K562 (cell line): ENCODE measurements at regions of chr13 and their contacts with region 1.

Region 1: GRCh38 chr13:95834134-95834765 is 157.3 kb downstream of the DNAJC3 start:
- DNase-seq: peak; percentile 56 to 63 (median 60)
- ATAC-seq: peak; percentile 85
- H3K4me3 ChIP-seq: no peak overlapping the region
- H3K27ac ChIP-seq: no peak overlapping the region
- H3K4me1 ChIP-seq: no peaks in the 10 kb centered on the region
- H3K27me3 ChIP-seq: no peaks in the 10 kb centered on the region
- CTCF ChIP-seq: peak; percentile 72 to 80 (median 79)
- EP300 ChIP-seq: no peak
- POLR2A ChIP-seq: no peak
- RAD21 ChIP-seq: peak; percentile 81 to 82

Region 2: GRCh38 chr13:95536632-95537241 is 297.5 kb before region 1 on chr13:
- CTCF ChIA-PET with region 1: no interaction called
- POLR2A ChIA-PET with region 1: no interaction called
- in situ Hi-C with region 1: loop called (anchors 25 kb)
- intact Hi-C with region 1: loop called (anchors 2 kb)
- DNase-seq: peak in 1 of 4 experiments; percentile 11
- ATAC-seq: no peak
- H3K4me3 ChIP-seq: no peak overlapping the region
- H3K27ac ChIP-seq: no peak overlapping the region
- H3K4me1 ChIP-seq: no peaks in the 10 kb centered on the region
- H3K27me3 ChIP-seq: no peaks in the 10 kb centered on the region
- CTCF ChIP-seq: peak in 2 of 3 experiments; percentile 39 to 55; a peak in 4 of 6 replicates
- EP300 ChIP-seq: no peak
- POLR2A ChIP-seq: no peak
- RAD21 ChIP-seq: peak; percentile 26 to 53

Region 3: GRCh38 chr13:95614641-95615245 is 219.5 kb before region 1 on chr13:
- CTCF ChIA-PET with region 1: no interaction called
- POLR2A ChIA-PET with region 1: no interaction called
- in situ Hi-C with region 1: loop called (anchors 10 kb)
- intact Hi-C with region 1: no loop called
- DNase-seq: no peak
- ATAC-seq: no peak
- H3K4me3 ChIP-seq: no peak overlapping the region
- H3K27ac ChIP-seq: no peak overlapping the region
- H3K4me1 ChIP-seq: no peaks in the 10 kb centered on the region
- H3K27me3 ChIP-seq: peaks cover 3 to 15% of the 10 kb centered on the region in 2 experiments; a peak in 3 of 5 replicates
- CTCF ChIP-seq: no peak
- EP300 ChIP-seq: no peak
- POLR2A ChIP-seq: no peak
- RAD21 ChIP-seq: no peak

Region 4: DNA sequence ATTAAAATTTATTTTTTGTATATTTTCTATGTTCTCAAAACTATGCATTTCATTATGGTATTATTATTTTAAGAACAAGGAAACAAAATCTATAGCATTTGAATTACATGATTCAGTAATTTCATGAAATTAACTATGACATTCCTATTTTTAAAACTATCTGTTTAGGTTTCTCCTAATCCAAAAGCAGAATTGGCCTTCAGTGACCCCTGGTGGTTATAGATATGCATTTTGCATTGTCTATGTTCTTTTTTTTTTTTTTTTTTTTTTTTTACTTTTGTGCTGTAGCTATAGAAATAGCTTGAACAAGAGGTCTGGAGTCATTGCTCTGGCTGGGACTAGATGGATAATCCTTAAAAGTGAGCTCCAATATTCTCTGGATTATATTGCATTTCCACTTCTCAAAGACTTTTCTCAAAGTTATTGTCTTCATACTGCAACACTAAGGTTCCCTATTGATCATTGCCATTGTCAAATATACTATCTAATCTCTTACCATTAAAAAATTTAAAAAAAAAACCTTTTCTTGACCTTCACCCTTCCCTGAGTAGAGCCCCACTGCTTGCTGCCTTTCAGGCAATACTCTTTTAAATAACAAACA is 173.2 kb before region 1 on chr13:
- CTCF ChIA-PET with region 1: no interaction called
- POLR2A ChIA-PET with region 1: no interaction called
- in situ Hi-C with region 1: no loop called
- intact Hi-C with region 1: loop called (anchors 1 kb)
- DNase-seq: peak; percentile 12 to 41 (median 22)
- ATAC-seq: peak; percentile 51; the same call in 1 of the 3 replicates
- H3K4me3 ChIP-seq: no peak overlapping the region
- H3K27ac ChIP-seq: no peak overlapping the region
- H3K4me1 ChIP-seq: peaks cover 0 to 5% of the 10 kb centered on the region in 2 experiments; a peak in 1 of 5 replicates
- H3K27me3 ChIP-seq: no peaks in the 10 kb centered on the region
- CTCF ChIP-seq: peak; percentile 29 to 64 (median 39); a peak in 3 of 6 replicates
- EP300 ChIP-seq: no peak
- POLR2A ChIP-seq: no peak
- RAD21 ChIP-seq: peak in 1 of 2 experiments; percentile 52; a peak in 2 of 4 replicates

Region 5: GRCh38 chr13:95704510-95704909 is 129.7 kb before region 1 on chr13:
- CTCF ChIA-PET with region 1: no interaction called
- POLR2A ChIA-PET with region 1: no interaction called
- in situ Hi-C with region 1: no loop called
- intact Hi-C with region 1: loop called (anchors 5 kb)
- DNase-seq: peak; percentile 9 to 17 (median 15)
- ATAC-seq: peak; percentile 64
- H3K4me3 ChIP-seq: no peak overlapping the region
- H3K27ac ChIP-seq: no peak overlapping the region
- H3K4me1 ChIP-seq: peaks cover 0 to 12% of the 10 kb centered on the region in 2 experiments; a peak in 3 of 5 replicates
- H3K27me3 ChIP-seq: no peaks in the 10 kb centered on the region
- CTCF ChIP-seq: peak; percentile 8 to 41 (median 30); a peak in 2 of 6 replicates
- EP300 ChIP-seq: no peak
- POLR2A ChIP-seq: no peak
- RAD21 ChIP-seq: 0 out of 4 replicates have a peak, but pooled peaks of 1 of the 2 experiments have one; percentile 15

Region 6: DNA sequence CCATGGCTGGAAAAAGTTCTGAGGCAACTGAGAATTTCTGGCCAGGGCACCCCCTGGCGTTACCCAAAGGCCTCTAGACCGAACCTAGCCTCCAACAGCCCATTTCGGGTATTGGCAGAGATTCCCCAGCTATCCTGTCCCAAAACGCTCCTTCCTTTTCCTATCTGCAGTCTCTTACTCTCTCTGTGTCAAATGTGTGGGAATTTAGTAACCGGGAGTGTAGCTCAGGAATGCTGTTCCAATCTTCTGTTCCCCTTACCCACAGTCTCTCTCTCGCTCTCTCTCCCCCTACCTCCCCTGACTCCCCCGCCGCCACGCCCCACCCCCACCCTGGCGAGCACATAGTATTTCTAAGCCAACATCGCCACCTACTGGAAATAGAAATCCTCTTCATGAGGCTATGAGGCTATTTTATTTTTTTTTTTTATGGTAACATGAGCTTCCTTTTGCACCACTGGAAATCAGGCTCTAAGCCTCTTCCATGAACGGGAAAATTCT is 1133.0 kb after region 1 on chr13:
- CTCF ChIA-PET with region 1: no interaction called
- POLR2A ChIA-PET with region 1: no interaction called
- in situ Hi-C with region 1: no loop called
- intact Hi-C with region 1: loop called (anchors 10 kb)
- DNase-seq: peak; percentile 54 to 64 (median 60)
- ATAC-seq: peak; percentile 93
- H3K4me3 ChIP-seq: peak overlapping the region; percentile 13; the same call in 1 of the 2 replicates
- H3K27ac ChIP-seq: no peak overlapping the region
- H3K4me1 ChIP-seq: no peaks in the 10 kb centered on the region
- H3K27me3 ChIP-seq: no peaks in the 10 kb centered on the region
- CTCF ChIP-seq: peak; percentile 16 to 51 (median 35); a peak in 4 of 6 replicates
- EP300 ChIP-seq: no peak
- POLR2A ChIP-seq: no peak
- RAD21 ChIP-seq: no peak